Common myeloid progenitor, CD34-positive (primary cell): ENCODE measurements at regions of chr17 and their contacts with region 1.

Region 1: DNA sequence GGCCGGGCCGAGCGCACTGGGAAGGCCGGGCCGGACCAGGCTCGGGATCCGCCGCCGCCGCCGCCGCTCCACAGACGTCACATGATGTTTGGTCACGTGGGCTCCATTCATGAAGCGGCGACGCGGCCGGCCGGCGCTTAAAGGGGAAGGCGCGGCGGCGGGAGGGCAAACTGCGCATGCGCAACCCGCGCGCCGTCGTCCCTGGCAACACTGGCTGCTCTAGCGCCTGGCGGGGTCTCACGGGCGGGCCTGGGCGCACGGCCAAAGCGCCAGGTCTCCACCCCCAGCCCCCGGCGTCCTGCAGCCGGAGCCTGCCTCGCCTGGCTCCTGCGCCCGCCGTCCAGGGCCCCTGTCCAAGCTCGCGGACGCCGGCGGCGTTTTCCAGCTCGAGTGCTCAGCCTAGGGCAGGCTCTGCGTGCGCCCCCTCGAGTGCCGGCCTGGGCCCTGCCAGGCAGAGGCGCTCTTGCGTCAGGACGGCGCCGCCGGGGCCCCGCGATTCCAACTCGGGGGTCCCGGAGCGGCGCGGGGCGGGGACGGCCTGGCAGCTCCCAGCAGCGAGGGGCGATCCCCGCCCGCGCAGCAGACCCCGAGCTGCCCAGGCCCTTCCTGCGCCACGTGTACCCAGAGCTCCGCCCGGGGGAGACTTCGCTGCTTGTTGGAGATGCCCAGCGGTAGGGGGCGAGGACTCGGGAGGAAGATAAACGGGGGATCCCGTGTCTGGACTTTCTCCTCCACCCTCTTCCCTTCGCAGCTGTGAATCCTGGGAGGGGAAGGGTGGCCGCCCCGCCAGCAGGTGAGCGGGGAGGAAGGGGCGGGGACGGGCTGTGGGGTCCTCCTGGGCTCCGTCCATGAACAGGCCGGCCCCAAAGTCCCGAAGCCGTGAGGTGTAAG is at the start of gene MAFG:
- DNase-seq: peak; percentile 92 to 95 (median 94)
- H3K4me3 ChIP-seq: peak within 1 kb of the TSS; percentile 46 to 83 (median 77)
- H3K27ac ChIP-seq: peak within 1 kb of the TSS; percentile 92 to 98
- H3K4me1 ChIP-seq: peaks cover 0 to 67% (median 58%) of the 10 kb centered on the region in 4 experiments
- H3K27me3 ChIP-seq: peaks cover 0 to 24% (median 13%) of the 10 kb centered on the region in 5 experiments

Region 2: DNA sequence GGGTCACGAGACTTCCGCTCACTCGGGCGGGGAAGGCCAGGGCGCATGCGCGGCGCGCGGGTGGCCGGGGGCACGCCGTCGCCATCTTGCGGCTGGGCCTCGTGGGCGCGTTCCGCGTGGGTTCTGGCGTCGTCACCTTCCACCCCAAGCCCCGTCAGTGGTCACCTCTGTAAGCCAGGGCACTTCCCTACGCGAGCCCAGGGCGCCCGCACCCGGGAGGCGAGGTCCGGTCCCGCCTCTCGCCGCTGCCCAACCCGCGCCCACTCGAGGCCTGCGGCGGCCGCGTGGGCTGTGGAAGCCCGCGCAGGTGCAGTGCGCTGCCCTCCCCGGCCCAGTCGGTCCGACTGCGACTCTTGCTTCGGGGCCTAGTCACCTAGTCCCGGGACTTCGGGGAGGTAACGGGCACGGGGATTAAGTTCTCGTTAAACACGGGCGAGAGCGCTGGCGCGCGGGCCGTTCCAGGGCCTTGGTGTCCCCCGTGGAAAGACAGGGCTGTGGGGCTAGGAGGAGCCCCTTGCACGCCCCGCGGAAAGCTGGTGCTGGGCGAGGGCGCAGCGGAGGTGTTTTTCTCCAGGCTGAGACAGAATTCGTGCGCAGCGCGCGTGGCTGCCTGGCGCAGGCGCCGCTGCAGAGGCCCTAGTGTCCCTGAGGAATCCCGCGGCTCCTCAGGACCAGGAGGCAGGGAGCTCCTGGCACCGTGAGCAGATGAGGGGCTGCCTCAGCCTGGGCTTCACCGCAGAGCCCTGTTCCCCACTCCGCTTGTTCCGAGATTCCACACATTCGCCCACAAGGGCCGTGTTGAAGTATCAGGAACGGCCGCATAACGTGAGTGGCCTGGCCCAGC is 56.3 kb before region 1 on chr17:
- CTCF ChIA-PET with region 1: interaction called, 10 read pairs
- POLR2A ChIA-PET with region 1: interaction called, 4 read pairs
- DNase-seq: peak; percentile 88 to 93 (median 91)
- H3K4me3 ChIP-seq: peak overlapping the region; percentile 46 to 90 (median 81)
- H3K27ac ChIP-seq: peak overlapping the region; percentile 88 to 95
- H3K4me1 ChIP-seq: peaks cover 0 to 56% (median 48%) of the 10 kb centered on the region in 4 experiments
- H3K27me3 ChIP-seq: no peaks in the 10 kb centered on the region

Region 3: DNA sequence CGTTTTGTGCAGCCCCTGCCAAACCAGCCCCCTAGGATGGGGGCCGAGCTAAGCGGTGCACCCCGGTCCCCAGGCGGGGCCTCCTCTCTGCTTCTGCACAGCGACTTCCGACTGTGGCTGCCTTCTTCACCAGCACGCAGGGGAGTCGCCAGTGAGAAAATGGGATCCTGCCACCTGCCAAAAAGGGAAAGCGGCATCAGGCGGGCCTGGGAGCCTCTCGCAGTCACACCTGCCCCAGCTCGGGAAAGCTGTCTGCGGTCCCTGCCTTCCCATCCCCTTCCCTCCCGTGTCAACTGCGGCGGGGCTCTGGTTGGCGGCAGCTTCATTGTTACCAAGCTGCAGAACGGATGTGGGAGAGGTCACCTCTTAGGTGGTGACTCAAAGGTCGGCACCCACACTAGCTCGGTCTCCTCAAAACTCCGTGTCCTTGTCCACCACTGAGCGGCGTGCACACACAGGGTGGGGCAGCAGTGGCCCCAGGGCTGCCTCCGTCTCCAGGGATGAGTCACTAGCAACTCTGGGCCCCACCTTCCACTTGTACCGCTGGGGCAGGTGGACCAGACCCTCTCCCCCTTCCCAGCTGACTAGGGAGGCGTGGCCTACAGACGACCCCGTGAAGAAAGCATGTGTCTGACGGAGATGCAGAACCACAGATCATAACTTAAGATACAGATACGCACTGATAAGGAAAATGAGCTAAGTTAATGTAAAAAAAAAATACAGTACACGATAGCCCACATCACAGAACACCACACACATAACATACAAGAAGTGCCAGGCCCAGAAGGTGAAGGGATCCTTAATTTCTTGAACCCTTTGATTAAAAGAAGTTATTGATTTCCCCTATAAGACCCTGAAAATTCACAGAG is 15.2 kb before region 1 on chr17:
- CTCF ChIA-PET with region 1: interaction called, 12 read pairs
- POLR2A ChIA-PET with region 1: interaction called, 6 read pairs
- DNase-seq: no peak
- H3K4me3 ChIP-seq: no peak overlapping the region
- H3K27ac ChIP-seq: no peak overlapping the region
- H3K4me1 ChIP-seq: peaks cover 9 to 32% (median 23%) of the 10 kb centered on the region in 4 experiments
- H3K27me3 ChIP-seq: peaks cover 0 to 2% (median 0%) of the 10 kb centered on the region in 5 experiments

Region 4: GRCh38 chr17:81959362-81960129 is 31.6 kb after region 1 on chr17:
- CTCF ChIA-PET with region 1: interaction called, 15 read pairs
- POLR2A ChIA-PET with region 1: interaction called, 4 read pairs
- DNase-seq: peak; percentile 54 to 73 (median 72)
- H3K4me3 ChIP-seq: peak overlapping the region in 6 of 7 experiments; percentile 9 to 61 (median 40)
- H3K27ac ChIP-seq: no peak overlapping the region
- H3K4me1 ChIP-seq: peaks cover 0 to 22% (median 19%) of the 10 kb centered on the region in 4 experiments
- H3K27me3 ChIP-seq: peaks cover 0 to 63% (median 21%) of the 10 kb centered on the region in 5 experiments